ENCODE measurements at regions of chr5 and their contacts with region 1.

Region 1: GRCh38 chr5:76544268-76544926 is 78.8 kb downstream of the F2RL2 start:
- DNase-seq: peak in 8 of 9 donors; percentile 37 to 69 (median 58)
- ATAC-seq: peak; percentile 31
- H3K4me3 ChIP-seq: peak overlapping the region; percentile 33
- H3K4me3 Mint-ChIP-seq: peak overlapping the region; percentile 43 to 80 (median 74)
- H3K27ac ChIP-seq: peak overlapping the region; percentile 73
- H3K27ac Mint-ChIP-seq: peak overlapping the region; percentile 93 to 98 (median 96)
- H3K4me1 ChIP-seq: peaks cover 57 to 86% of the 10 kb centered on the region in 2 donors
- H3K4me1 Mint-ChIP-seq: peaks cover 64 to 89% (median 84%) of the 10 kb centered on the region in 7 donors
- H3K27me3 ChIP-seq: no peaks in the 10 kb centered on the region
- H3K27me3 Mint-ChIP-seq: no peaks in the 10 kb centered on the region

Region 2: DNA sequence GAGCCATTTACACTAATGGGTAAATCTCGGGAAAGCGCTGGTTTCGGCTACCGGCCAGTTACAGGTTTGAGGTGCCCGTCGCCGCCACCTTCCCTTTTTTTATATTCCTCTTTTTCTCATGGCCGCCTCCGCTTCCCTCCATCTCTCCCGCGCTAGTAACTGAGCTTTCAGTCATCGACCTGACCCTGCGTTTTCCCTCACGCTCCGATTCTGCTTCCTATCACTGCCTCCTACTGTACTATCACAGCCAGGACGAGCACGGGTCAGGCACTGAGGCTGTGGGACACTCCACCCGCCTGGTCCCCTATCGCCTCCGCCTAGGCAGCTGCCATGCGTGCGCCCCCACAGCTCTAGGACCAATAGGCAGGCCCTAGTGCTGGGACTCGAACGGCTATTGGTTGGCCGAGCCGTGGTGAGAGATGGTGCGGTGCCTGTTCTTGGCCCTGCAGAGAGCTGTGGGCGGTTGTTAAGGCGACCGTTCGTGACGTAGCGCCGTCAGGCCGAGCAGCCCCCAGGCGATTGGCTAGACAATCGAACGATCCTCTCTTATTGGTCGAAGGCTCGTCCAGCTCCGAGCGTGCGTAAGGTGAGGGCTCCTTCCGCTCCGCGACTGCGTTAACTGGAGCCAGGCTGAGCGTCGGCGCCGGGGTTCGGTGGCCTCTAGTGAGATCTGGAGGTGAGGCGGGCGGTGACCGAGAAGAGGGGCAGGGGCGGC is 1207.6 kb before region 1 on chr5 and contains the start of gene HMGCR:
- CTCF ChIA-PET with region 1: no interaction called
- POLR2A ChIA-PET with region 1: interaction called, 3 read pairs
- intact Hi-C with region 1: loop called in 1 of 2 experiments (anchors 2 kb)
- DNase-seq: peak; percentile 82 to 97 (median 95)
- ATAC-seq: peak; percentile 96
- H3K4me3 ChIP-seq: peak within 1 kb of the TSS; percentile 85
- H3K4me3 Mint-ChIP-seq: no peak within 1 kb of the TSS
- H3K27ac ChIP-seq: peak within 1 kb of the TSS; percentile 83
- H3K27ac Mint-ChIP-seq: no peak within 1 kb of the TSS
- H3K4me1 ChIP-seq: peaks cover 8 to 10% of the 10 kb centered on the region in 2 donors
- H3K4me1 Mint-ChIP-seq: peaks cover 18 to 41% (median 37%) of the 10 kb centered on the region in 7 donors
- H3K27me3 ChIP-seq: no peaks in the 10 kb centered on the region
- H3K27me3 Mint-ChIP-seq: no peaks in the 10 kb centered on the region
- total RNA-seq, gene HMGCR: 38.8 to 57.3 (median 43.8) TPM

Region 3: GRCh38 chr5:76099286-76099702 is 445.1 kb before region 1 on chr5:
- CTCF ChIA-PET with region 1: no interaction called
- POLR2A ChIA-PET with region 1: no interaction called
- intact Hi-C with region 1: loop called in 1 of 2 experiments (anchors 10 kb)
- DNase-seq: peak in 7 of 9 donors; percentile 4 to 67 (median 56)
- ATAC-seq: peak; percentile 92
- H3K4me3 ChIP-seq: no peak overlapping the region
- H3K4me3 Mint-ChIP-seq: peak overlapping the region in 2 of 10 donors; percentile 0
- H3K27ac ChIP-seq: no peak overlapping the region
- H3K27ac Mint-ChIP-seq: peak overlapping the region in 4 of 9 donors; percentile 10 to 68 (median 16)
- H3K4me1 ChIP-seq: no peaks in the 10 kb centered on the region
- H3K4me1 Mint-ChIP-seq: peaks cover 7 to 13% (median 9%) of the 10 kb centered on the region in 7 donors
- H3K27me3 ChIP-seq: no peaks in the 10 kb centered on the region
- H3K27me3 Mint-ChIP-seq: peaks cover 5 to 38% (median 18%) of the 10 kb centered on the region in 5 donors

Region 4: DNA sequence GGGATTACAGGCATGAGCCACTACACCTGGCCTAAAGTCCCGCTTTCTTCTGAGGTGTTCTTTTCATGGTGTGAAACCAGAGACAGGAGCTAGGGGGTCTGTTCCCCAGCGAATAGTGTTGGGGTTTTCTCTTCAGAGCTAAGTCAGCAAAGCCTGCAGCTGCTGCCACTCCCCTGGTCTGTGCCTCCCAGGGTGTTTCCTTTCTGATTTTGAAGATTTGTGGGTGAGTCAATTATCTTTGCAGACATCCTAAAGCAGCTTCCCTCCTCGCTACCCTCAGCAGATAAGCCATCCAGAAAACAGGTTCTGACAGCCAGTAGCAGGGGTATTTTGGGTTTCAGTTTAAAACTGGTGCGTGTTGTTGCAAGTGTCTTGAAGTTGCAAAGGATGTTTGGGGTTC is 213.3 kb before region 1 on chr5:
- CTCF ChIA-PET with region 1: interaction called, 4 read pairs
- POLR2A ChIA-PET with region 1: interaction called, 12 read pairs
- intact Hi-C with region 1: loop called in 1 of 2 experiments (anchors 1 kb)
- DNase-seq: peak in 7 of 9 donors; percentile 12 to 47 (median 29)
- ATAC-seq: peak; percentile 72
- H3K4me3 ChIP-seq: no peak overlapping the region
- H3K4me3 Mint-ChIP-seq: peak overlapping the region; percentile 20 to 74 (median 56)
- H3K27ac ChIP-seq: peak overlapping the region; percentile 38
- H3K27ac Mint-ChIP-seq: peak overlapping the region; percentile 70 to 98 (median 85)
- H3K4me1 ChIP-seq: peaks cover 26 to 60% of the 10 kb centered on the region in 2 donors
- H3K4me1 Mint-ChIP-seq: peaks cover 43 to 71% (median 68%) of the 10 kb centered on the region in 7 donors
- H3K27me3 ChIP-seq: no peaks in the 10 kb centered on the region
- H3K27me3 Mint-ChIP-seq: no peaks in the 10 kb centered on the region

Region 5: GRCh38 chr5:76521240-76521758 is 23.1 kb before region 1 on chr5:
- CTCF ChIA-PET with region 1: no interaction called
- POLR2A ChIA-PET with region 1: interaction called, 3 read pairs
- intact Hi-C with region 1: loop called in 1 of 2 experiments (anchors 1 kb)
- DNase-seq: no peak
- ATAC-seq: peak; percentile 51
- H3K4me3 ChIP-seq: no peak overlapping the region
- H3K4me3 Mint-ChIP-seq: peak overlapping the region in 5 of 10 donors; percentile 27 to 70 (median 35)
- H3K27ac ChIP-seq: no peak overlapping the region
- H3K27ac Mint-ChIP-seq: peak overlapping the region in 6 of 9 donors; percentile 6 to 78 (median 32)
- H3K4me1 ChIP-seq: peaks cover 0 to 7% of the 10 kb centered on the region in 2 donors
- H3K4me1 Mint-ChIP-seq: peaks cover 43 to 73% (median 55%) of the 10 kb centered on the region in 7 donors
- H3K27me3 ChIP-seq: no peaks in the 10 kb centered on the region
- H3K27me3 Mint-ChIP-seq: no peaks in the 10 kb centered on the region

Region 6: DNA sequence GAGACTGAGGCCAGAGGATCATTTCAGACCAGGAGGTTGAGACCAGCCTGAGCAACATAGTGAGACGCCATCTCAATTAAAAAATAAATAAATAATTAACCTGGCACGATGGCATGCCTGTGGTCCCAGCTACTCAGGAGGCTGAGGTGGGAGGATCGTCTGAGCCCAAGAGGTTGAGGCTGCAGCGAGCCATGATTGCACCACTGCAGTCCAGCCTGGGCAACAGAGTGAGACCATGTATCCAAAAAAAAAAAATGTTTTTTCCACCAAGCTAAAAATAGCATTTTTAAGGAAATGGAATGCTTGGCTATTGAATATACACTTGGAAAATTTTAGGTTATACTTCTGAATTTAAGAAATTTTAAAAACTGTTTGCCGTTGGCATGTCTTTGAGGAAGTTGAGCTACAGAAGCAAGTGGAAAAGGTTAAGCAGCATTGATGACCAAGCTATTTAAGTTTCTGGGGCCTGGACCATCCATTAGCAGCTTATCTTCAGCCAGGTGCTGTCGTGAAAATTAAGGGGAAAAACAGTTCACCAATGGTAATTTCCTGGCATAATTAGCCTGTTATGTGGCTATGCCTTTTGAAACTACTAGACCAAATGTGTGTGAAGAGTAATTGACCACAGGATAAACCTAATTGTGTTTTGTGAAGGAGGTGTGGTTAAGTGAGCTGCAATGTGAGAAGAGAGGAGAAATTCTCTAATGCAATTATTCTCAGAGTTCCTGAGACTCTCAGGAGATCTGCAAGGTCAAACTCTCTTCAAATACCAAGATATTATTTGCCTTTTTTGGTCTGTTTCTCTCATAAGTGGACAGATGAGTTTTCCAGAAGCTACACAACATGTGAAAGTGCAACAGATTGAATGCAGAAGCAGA is 192.5 kb after region 1 on chr5:
- CTCF ChIA-PET with region 1: no interaction called
- POLR2A ChIA-PET with region 1: no interaction called
- intact Hi-C with region 1: loop called in 1 of 2 experiments (anchors 1 kb)
- DNase-seq: no peak
- ATAC-seq: no peak
- H3K4me3 ChIP-seq: no peak overlapping the region
- H3K4me3 Mint-ChIP-seq: peak overlapping the region in 2 of 10 donors; percentile 51 to 69
- H3K27ac ChIP-seq: no peak overlapping the region
- H3K27ac Mint-ChIP-seq: peak overlapping the region in 2 of 9 donors; percentile 71 to 79
- H3K4me1 ChIP-seq: peaks cover 5 to 70% of the 10 kb centered on the region in 2 donors
- H3K4me1 Mint-ChIP-seq: peaks cover 8 to 49% (median 11%) of the 10 kb centered on the region in 7 donors
- H3K27me3 ChIP-seq: no peaks in the 10 kb centered on the region
- H3K27me3 Mint-ChIP-seq: peaks cover 3 to 11% (median 5%) of the 10 kb centered on the region in 5 donors

Measured in naive thymus-derived CD4-positive, alpha-beta T cell (primary cell).